ENCODE measurements at regions of chr4 and their contacts with region 1.

Region 1: GRCh38 chr4:74376888-74377483 is 12.0 kb downstream of the EREG start:
- DNase-seq: no peak

Region 2: GRCh38 chr4:74444891-74445642 is 68.1 kb after region 1 on chr4 and contains the start of gene AREG:
- intact Hi-C with region 1: loop called (anchors 2 kb)
- DNase-seq: peak; percentile 93
- total RNA-seq, gene AREG: 7.8 TPM

Region 3: DNA sequence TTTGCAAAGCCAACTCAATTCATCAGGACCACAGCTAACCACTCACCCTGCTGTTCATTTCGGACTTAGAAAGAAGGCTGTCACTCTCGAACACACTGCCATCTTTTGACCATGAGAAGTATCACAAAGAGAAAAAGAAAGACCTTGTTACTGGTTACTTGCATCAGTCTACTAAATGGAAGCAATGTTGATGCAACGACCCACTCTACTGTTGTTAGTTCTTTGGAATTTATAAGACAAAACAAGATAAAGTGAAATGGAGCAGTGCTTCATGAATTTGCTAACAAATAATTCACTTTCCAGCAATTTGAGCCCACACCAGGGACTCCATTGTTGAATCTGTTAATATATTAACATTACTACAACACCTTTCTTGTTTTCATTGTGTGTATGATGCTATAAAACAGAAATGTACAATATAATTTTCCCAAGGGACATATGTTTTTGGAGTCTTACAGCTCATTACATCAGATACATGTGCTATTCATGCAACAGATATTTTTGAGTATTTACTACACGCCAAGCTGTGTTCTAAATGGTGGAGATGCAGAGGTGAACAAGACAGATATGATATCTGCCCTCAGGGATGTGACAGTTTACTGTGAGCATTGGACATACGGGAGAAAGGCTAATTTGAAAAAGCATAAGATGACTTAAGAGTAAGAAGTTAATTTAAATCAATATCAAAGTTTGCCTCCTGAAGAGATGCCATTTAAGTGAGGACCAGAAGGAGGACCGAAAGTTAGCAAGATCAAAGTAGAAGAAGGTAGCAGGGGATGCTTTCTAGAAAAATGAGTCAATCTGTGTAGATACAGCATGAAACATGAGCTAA is 155.2 kb after region 1 on chr4:
- intact Hi-C with region 1: loop called (anchors 1 kb)
- DNase-seq: no peak

Region 4: GRCh38 chr4:74623041-74623440 is 246.1 kb after region 1 on chr4:
- intact Hi-C with region 1: loop called (anchors 5 kb)
- DNase-seq: no peak

Region 5: GRCh38 chr4:74675673-74676279 is 298.8 kb after region 1 on chr4:
- intact Hi-C with region 1: loop called (anchors 2 kb)
- DNase-seq: no peak

Measured in cardiac septum (tissue), 1 donor.